ENCODE measurements at regions of chr20 and their contacts with region 1.

Region 1: GRCh38 chr20:37564388-37565133 is 36.9 kb upstream of the BLCAP start:
- ATAC-seq: peak; percentile 33 to 83 (median 69)
- H3K4me3 ChIP-seq: no peak overlapping the region
- H3K27ac ChIP-seq: no peak overlapping the region
- H3K4me1 ChIP-seq: peaks cover 34 to 38% of the 10 kb centered on the region in 2 donors

Region 2: GRCh38 chr20:37804584-37805566 is 240.3 kb after region 1 on chr20:
- in situ Hi-C with region 1: no loop called
- ATAC-seq: peak in 1 of 8 experiments; percentile 35
- H3K4me3 ChIP-seq: no peak overlapping the region
- H3K27ac ChIP-seq: no peak overlapping the region
- H3K4me1 ChIP-seq: peaks cover 20 to 39% of the 10 kb centered on the region in 2 donors

Region 3: DNA sequence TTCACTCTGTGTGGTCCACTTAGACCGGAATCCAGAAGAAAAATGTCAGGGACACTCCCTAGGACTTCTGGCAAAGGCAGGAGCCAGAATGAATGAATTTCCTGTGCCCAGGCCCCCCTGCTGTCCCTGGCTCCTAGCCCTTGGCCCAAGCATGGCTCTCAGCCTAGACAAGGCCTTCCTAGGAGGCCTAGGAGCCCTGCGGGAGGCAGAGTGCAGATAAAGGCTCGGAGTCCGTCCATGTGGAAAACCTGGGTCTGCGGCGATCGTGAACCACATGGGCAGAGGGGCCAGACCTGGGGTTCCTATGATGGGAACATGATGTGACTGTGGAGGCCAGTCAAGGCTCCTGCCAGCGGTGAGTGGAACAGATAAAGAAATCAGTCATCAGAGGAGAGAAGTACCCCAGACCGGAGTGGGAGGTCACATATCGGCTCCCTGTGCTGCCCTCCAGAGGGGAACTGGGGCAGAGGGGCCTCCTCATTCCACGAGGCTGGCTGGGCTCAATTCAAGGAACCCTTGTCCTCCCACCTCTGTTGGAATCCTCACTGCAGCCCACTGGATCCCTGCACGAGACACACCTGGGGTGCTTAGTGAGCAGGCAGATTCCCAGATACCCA is 332.5 kb after region 1 on chr20:
- in situ Hi-C with region 1: loop called in 1 of 9 experiments (anchors 25 kb)
- ATAC-seq: peak in 6 of 8 experiments; percentile 21 to 49 (median 38)
- H3K4me3 ChIP-seq: no peak overlapping the region
- H3K27ac ChIP-seq: peak overlapping the region in 1 of 2 donors; percentile 74
- H3K4me1 ChIP-seq: peaks cover 26 to 55% of the 10 kb centered on the region in 2 donors

Region 4: GRCh38 chr20:37990571-37991151 is 426.1 kb after region 1 on chr20:
- in situ Hi-C with region 1: loop called in 7 of 9 experiments (anchors 10 to 25 kb)
- ATAC-seq: peak in 5 of 8 experiments; percentile 1 to 59 (median 15)
- H3K4me3 ChIP-seq: no peak overlapping the region
- H3K27ac ChIP-seq: peak overlapping the region in 1 of 2 donors; percentile 56
- H3K4me1 ChIP-seq: peaks cover 68 to 79% of the 10 kb centered on the region in 2 donors

Region 5: DNA sequence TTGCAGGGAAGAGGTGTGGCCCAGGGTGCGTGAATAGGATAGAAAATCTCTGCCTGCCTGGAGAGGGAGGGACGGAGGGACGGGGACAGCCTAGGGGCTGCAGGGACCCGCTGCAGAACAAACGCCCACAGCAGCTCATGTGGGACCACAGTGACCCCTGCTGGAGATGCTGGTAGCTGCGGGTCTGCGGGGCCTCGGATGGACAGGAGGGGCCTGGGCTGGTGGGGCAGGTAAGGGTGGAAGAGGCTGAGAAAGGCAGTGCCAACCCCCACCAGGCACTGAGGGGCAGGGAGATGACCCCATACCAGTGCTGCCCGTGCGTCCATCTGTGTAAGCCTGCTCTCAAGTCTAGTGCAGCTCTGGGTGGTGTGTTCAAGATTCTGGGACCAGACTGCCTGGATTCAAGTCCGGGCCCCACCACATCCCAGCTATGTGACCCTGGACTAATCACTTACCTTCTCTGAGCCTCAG is 656.6 kb after region 1 on chr20:
- in situ Hi-C with region 1: loop called in 1 of 9 experiments (anchors 25 kb)
- ATAC-seq: peak; percentile 66 to 91 (median 85)
- H3K4me3 ChIP-seq: no peak overlapping the region
- H3K27ac ChIP-seq: no peak overlapping the region
- H3K4me1 ChIP-seq: peaks cover 0 to 2% of the 10 kb centered on the region in 2 donors